ENCODE measurements at regions of chr4 and their contacts with region 1.

Region 1: DNA sequence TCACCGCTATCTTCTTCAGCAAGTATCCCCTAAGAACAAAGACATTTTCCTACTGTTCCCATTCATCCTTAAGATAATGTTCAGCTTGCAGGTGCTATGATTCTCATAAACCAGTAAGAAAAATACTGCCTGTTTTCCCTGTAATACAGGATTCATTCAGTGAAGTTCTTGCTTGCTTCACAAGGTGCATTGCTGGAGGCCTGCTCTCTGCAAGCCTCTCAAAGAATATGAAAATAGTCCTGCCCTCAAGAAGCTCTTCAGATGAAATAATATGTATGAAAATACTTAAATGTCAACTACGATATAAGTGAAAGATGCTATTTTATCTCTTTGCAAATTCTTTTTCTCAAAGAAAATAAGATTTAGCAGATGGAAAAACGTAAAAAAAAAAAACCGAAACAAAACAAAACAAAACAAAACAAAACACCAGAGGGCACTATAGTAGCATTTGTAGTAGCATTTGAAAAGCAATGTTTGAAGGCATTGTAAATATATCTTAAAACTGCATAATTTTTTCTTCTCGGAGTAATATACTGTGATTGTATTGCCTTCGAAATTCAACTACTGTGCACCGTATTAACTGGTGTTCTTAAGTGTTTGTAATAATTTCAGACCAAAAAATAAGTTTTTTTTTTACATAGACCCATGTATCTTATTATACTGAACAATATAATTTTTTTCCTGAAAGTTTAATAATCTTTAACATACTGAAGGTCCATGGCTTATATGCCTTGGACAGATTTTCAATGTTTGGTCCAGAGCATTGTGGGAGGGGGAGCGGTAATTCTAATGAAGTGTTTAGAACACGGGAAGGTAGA is 26.0 kb downstream of the ADH4 start:
- DNase-seq: peak; percentile 29
- CTCF ChIP-seq: peak; percentile 19

Region 2: DNA sequence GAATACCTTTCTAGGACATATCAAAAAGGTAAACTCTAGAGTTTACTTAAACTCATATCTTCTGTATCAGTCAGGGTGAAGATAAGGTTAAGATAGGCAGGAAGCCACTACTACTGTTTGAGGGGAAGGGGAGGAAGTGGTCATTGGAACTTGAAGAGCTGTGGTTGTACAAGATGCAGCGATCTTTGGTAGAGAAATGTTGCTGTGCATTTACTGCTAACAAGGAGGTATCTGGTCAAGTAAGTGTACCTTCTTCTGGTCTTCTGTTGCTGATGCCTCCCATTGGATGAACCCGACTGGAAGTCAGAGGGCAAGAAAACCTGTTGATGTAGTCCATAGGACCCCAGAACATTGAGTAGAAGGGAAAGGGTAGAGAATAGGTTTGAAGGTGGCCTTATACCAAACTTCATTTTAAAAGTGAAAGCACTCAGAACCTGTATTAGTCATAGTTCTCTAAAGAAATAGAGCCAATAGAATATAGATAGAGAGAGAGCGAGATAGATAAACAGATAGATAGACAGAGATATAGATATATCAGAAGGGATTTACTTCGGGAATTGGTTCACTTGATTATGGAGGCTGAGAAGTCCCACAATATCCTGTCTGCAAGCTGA is 411.8 kb before region 1 on chr4:
- in situ Hi-C with region 1: no loop called
- DNase-seq: no peak
- CTCF ChIP-seq: no peak

Region 3: DNA sequence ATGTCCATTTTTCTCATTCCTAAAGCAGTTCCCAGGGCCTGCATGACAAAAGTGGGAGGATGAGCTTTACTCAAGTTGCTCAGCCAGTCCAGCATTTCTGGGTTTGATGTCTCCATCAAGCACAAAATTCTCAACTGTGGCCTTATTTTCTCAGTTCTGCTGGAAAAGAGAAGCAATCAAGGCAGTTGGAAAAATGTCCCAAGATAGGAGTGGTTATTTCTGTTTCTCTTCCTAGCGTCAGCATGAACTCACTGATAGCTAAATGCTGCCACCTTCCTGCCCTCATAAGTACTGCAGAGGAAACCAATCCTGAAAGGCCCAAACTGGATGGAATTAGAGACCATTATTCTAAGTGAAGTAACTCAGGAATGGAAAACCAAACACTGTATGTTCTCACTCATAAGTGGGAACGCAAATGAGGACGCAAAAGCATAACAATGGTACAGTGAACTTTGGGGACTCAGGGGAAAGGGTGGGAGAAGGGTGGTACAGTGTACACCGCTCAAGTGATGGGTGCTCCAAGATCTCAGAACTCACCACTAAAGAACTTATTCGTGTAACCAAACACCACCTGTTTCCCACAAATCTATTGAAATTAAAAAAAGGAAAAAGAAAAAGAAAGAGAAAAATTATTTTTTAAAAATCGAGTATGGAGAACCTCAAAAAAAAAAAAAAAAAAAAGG is 287.5 kb after region 1 on chr4:
- in situ Hi-C with region 1: loop called (anchors 25 kb)
- DNase-seq: peak; percentile 12
- CTCF ChIP-seq: peak; percentile 89

Measured in GM13977 (cell line).